Dendritic cell treated with granulocyte-macrophage colony-stimulating factor and Interleukin-4, amounts not matched to agents 40 ng/mL and 50 ng/mL, for 4 days (primary cell): ENCODE measurements at regions of chr1 and their contacts with region 1.

Region 1: DNA sequence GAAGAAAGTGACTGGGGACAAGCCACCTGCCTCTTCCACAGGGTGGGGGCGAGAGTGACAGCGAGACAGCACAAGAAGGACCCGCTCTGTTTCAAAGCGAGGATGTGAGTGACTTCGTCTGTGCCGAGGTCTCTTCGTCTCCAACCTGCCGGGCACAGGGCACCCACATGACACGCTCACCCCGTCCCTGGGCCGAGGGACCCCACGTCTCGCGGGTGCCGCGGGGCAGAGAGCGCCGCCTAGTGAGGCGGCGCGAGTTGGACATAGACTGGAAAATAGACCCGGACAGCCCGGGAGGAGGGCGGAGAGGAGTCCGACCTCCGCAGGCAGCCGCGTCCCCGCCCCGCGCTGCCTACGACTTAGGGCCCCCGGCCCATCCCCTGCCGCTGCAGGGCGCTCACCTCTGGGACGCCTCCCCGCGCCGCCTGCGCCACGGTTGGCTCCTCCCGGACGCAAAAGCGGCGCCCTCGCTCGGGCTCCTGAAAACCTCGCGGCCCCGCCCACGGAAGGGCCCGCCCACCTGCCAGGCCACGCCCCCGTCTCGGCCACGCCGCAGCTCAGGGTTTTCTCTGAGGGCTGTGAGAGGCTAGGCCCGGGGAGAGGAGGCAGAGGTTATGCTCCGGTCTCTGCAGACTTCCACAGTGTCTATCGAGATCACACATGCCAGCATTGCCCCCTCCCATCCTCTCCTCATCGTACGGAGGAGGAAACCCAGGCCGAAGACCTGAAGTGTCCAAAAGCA is at the start of gene TLR5:
- H3K4me3 Mint-ChIP-seq: peak within 1 kb of the TSS; percentile 80
- H3K27ac Mint-ChIP-seq: peak within 1 kb of the TSS; percentile 84
- H3K4me1 Mint-ChIP-seq: peaks cover 66% of the 10 kb centered on the region
- H3K27me3 Mint-ChIP-seq: no peaks in the 10 kb centered on the region

Region 2: GRCh38 chr1:223161321-223161720 is 18.4 kb after region 1 on chr1:
- intact Hi-C with region 1: no loop called
- H3K4me3 Mint-ChIP-seq: no peak overlapping the region
- H3K27ac Mint-ChIP-seq: peak overlapping the region; percentile 13
- H3K4me1 Mint-ChIP-seq: peaks cover 31% of the 10 kb centered on the region
- H3K27me3 Mint-ChIP-seq: peaks cover 7% of the 10 kb centered on the region

Region 3: DNA sequence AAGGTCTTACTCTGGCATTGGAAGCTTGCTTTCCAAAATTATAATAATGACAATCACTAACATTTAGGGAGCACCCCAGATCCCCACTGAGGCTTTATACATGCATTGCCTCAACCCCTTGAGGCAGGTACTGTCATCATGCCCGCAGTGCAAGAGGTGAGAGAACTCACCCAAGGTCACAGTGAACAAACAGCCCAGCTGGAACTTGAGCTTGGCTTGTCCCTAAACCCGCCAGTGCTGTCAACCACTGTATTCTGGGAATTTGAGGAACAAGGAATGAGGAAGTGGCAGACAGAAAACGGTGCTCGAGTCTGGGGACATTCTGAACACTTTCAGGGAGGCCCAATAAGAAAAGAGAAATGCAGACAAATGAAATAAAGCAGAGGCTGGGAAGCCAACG is 34.7 kb after region 1 on chr1:
- intact Hi-C with region 1: loop called (anchors 2 kb)
- H3K4me3 Mint-ChIP-seq: peak overlapping the region; percentile 48
- H3K27ac Mint-ChIP-seq: peak overlapping the region; percentile 93
- H3K4me1 Mint-ChIP-seq: peaks cover 79% of the 10 kb centered on the region
- H3K27me3 Mint-ChIP-seq: no peaks in the 10 kb centered on the region

Region 4: GRCh38 chr1:223244366-223245103 is 101.6 kb after region 1 on chr1:
- intact Hi-C with region 1: loop called (anchors 5 kb)
- H3K4me3 Mint-ChIP-seq: no peak overlapping the region
- H3K27ac Mint-ChIP-seq: no peak overlapping the region
- H3K4me1 Mint-ChIP-seq: peaks cover 13% of the 10 kb centered on the region
- H3K27me3 Mint-ChIP-seq: peaks cover 13% of the 10 kb centered on the region

Region 5: GRCh38 chr1:223670458-223671168 is 527.6 kb after region 1 on chr1:
- intact Hi-C with region 1: loop called (anchors 10 kb)
- H3K4me3 Mint-ChIP-seq: no peak overlapping the region
- H3K27ac Mint-ChIP-seq: no peak overlapping the region
- H3K4me1 Mint-ChIP-seq: peaks cover 18% of the 10 kb centered on the region
- H3K27me3 Mint-ChIP-seq: peaks cover 5% of the 10 kb centered on the region